Activated naive CD4-positive, alpha-beta T cell treated with anti-CD3 and anti-CD28 coated beads for 36 hours (primary cell): ENCODE measurements at regions of chr2 and their contacts with region 1.

Region 1: DNA sequence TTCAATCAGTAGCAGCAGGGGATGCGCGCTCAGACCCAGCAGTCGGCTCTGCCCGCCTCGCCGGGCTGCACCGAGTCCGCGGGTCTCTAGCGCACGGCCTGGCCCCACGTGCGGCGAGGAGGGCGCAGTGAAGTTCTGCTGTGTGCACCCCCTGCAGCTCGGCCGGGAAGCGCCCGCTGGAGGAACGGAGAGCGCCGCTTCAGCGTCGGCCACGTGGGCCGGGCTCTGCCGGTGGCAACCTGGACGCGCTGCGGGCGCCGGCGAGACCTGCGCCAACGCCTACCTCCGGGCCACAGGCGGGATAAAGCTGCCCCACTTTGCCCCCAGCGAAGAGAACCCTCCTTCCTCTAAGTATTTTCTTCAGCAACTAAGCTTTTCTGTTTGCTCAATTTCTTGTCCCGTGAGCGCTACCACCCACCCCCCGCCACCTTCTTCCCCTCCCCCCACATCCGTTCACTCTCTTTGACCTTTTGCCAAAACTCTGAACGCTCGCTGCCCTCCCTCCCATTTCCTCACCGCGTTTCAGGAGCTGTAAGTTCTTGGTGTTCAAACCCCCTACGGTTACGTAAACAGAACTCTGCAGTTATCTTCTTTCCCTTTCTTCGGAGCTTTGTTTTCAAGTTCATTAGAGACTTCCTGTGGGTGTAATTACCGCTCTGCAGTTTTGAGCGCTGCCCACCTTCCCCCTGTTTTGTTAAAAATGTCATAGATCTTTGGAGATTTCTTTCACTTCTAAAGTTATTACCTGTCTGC is 42.6 kb upstream of the EDAR start:
- DNase-seq: peak; percentile 85
- H3K4me3 Mint-ChIP-seq: peak overlapping the region; percentile 81
- H3K27ac Mint-ChIP-seq: peak overlapping the region; percentile 91
- H3K4me1 Mint-ChIP-seq: peaks cover 65% of the 10 kb centered on the region
- H3K27me3 Mint-ChIP-seq: no peaks in the 10 kb centered on the region

Region 2: DNA sequence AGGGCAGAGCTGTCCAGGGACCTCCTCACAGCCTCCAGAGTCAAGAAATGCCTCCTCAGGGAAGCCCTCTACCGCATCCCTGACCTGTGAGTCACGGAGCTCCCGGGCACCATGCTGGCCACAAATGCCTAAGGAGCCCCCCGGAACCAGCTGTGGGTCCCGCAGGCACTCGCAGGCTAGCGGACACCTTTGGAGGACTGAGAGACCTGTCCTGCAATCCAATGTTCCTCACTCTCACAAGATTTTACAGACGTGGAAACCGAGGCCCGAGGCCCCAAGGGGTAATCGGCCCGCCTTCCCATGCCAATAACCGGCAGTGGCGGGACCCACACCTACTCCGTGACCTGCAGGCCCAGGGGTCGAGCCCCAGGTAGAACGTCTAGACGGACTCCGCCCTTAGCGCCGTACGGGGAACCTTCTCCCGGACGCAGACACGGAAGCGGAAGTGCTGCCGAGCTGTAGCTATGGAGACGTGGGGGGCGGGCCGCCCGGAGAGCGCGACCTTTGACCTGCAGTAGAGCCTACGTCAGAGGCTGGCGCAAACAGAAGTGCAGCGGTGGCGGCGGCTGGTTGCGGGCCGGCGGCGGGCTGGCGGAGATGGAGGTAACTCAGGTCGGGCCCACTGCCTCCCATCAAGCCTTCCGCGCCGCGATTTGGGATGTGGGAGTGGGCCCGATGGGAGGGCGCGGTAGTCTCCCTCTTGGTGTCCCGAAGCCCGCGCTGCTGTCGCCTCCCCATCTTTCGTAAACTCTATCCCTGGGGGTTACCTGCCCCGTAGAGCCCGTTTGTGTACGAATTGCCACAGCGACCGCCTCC is 582.8 kb before region 1 on chr2 and contains the start of gene GCC2:
- CTCF ChIA-PET with region 1: no interaction called
- intact Hi-C with region 1: loop called (anchors 2 kb)
- DNase-seq: peak; percentile 97
- H3K4me3 Mint-ChIP-seq: peak within 1 kb of the TSS; percentile 87
- H3K27ac Mint-ChIP-seq: peak within 1 kb of the TSS; percentile 91
- H3K4me1 Mint-ChIP-seq: peaks cover 27% of the 10 kb centered on the region
- H3K27me3 Mint-ChIP-seq: no peaks in the 10 kb centered on the region
- total RNA-seq, gene GCC2: 33.5 to 39.4 TPM

Region 3: DNA sequence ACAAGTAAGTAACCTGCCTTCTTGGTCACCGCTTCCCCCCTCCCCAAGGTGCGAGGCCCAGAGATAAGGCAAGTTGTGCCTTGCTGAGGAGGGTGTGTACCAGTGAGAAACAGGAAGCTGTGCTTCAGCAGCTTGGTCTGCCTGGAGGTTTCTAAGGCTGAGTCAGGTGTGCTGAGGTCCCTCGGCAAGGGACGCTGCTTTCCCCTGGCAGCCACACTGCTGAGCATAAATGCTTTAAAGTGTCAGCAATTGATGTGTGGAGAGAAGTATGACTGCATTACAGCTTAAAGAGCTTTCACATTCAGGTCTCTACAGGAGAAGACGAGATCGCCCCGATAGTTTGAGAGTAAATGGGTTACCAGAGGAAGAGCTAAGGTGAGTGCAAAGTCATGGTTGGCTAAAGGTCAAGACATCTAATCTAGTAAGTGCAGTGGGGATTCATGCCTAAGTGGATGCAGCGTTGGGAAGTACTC is 410.5 kb before region 1 on chr2:
- CTCF ChIA-PET with region 1: no interaction called
- intact Hi-C with region 1: loop called (anchors 5 kb)
- DNase-seq: peak; percentile 86
- H3K4me3 Mint-ChIP-seq: peak overlapping the region; percentile 84
- H3K27ac Mint-ChIP-seq: peak overlapping the region; percentile 92
- H3K4me1 Mint-ChIP-seq: peaks cover 80% of the 10 kb centered on the region
- H3K27me3 Mint-ChIP-seq: no peaks in the 10 kb centered on the region

Region 4: DNA sequence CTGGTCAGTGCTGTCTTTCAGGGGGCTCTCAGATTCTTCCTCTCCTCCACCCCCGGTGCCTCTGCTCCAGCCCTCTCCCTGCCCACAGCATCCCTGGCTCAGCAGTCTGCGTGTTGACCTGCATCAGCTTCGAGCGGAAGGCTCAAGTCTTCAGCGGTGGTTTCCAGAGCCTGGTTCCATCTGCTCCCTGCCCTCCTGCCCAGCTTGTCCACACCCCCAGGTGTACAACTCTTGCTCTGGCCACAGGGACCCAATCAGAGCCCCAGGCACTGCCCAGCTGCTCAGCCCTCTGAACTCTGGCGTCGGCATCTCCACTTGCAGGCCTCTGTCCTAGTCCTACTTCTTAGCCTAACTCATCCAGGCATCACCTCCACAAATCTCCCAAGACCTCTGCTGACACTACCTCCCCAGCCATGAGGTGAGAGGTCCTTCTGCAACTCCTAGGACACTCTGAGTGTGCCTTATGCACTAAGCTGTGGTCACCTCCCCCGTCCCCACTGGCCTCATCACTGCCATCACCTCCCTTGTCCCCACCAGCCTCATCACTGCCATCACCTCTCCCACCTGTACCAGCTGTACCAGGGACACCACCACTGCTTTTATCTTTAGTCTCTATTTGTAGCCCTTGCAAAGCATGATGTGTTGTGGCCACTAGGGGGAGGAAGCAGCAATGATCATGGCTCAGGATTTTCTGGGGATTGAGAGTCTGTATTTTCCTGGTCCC is 103.6 kb before region 1 on chr2:
- CTCF ChIA-PET with region 1: interaction called, 8 read pairs
- intact Hi-C with region 1: loop called (anchors 1 kb)
- DNase-seq: peak; percentile 66
- H3K4me3 Mint-ChIP-seq: no peak overlapping the region
- H3K27ac Mint-ChIP-seq: no peak overlapping the region
- H3K4me1 Mint-ChIP-seq: no peaks in the 10 kb centered on the region
- H3K27me3 Mint-ChIP-seq: no peaks in the 10 kb centered on the region

Region 5: DNA sequence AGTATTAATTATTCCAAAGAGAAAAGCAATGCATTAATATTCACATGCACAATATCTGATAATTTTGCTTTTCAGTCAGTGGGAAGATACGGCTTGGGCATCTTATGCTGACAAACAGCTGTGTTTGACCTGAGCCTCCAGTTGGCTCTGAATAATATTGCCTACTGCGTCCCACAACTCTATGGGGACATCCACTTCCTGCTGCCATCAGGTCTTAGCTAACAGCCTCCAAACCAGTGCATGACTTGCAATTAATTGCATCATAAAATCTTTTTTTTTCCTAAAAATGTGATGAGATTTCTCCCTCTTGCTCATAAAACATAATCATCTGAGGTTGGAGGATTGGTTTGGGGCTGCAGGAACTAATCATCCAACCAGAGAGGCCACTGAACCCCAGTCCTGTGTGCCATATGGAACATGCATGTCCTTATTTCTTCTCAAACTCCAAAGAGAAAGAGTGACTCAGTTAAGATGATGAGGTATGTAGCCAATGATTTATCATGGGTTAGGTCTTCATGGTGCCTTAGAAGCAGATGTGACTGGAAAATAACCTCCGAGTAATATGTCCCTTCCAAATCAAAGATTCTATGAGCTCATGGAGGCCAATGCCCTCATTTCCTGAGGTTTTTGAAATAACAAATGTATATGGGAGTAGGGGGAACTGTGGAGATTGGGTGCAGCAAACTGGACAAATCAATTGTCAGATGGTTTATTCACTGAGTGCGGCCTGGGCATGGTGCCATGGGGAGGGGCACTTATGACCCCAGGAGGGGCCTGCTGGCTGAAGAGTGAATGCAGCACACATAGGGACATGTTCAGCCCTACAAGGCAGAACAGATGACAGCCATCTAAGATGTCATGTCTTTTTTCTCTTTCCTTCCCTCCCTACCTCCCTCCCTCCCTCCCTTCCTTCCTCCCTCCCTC is 82.1 kb before region 1 on chr2:
- CTCF ChIA-PET with region 1: no interaction called
- intact Hi-C with region 1: no loop called
- DNase-seq: no peak
- H3K4me3 Mint-ChIP-seq: no peak overlapping the region
- H3K27ac Mint-ChIP-seq: no peak overlapping the region
- H3K4me1 Mint-ChIP-seq: peaks cover 6% of the 10 kb centered on the region
- H3K27me3 Mint-ChIP-seq: no peaks in the 10 kb centered on the region

Region 6: DNA sequence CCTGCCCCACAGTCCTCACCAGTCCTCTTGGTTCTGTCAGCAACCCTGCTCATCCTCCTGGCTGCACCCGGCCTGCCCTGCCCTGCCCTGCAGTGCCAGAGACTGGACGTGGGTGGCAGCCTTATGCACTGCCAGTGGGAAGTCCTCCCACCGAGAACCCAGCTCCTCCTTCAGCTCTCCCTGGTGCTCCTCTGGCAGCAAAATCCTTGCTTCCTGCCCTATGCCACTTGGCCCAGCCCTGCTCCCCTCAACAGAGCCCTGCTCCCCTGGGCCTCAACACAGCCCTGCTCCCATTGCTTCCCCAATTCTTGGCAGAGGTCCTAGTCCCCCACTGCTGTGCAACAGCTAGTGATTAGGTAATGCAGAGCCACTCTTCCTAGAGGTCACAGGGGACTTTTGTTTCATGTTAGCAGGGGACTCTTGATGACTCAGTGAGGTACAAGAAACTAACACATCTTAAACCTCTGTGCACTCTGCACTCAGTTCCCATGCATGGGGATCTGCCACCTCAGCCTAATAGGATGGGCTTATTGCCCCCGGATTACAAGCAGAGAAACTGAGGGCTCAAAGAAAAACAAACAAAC is 15.4 kb after region 1 on chr2:
- CTCF ChIA-PET with region 1: no interaction called
- intact Hi-C with region 1: loop called (anchors 2 kb)
- DNase-seq: peak; percentile 48
- H3K4me3 Mint-ChIP-seq: no peak overlapping the region
- H3K27ac Mint-ChIP-seq: no peak overlapping the region
- H3K4me1 Mint-ChIP-seq: peaks cover 24% of the 10 kb centered on the region
- H3K27me3 Mint-ChIP-seq: no peaks in the 10 kb centered on the region

Region 7: DNA sequence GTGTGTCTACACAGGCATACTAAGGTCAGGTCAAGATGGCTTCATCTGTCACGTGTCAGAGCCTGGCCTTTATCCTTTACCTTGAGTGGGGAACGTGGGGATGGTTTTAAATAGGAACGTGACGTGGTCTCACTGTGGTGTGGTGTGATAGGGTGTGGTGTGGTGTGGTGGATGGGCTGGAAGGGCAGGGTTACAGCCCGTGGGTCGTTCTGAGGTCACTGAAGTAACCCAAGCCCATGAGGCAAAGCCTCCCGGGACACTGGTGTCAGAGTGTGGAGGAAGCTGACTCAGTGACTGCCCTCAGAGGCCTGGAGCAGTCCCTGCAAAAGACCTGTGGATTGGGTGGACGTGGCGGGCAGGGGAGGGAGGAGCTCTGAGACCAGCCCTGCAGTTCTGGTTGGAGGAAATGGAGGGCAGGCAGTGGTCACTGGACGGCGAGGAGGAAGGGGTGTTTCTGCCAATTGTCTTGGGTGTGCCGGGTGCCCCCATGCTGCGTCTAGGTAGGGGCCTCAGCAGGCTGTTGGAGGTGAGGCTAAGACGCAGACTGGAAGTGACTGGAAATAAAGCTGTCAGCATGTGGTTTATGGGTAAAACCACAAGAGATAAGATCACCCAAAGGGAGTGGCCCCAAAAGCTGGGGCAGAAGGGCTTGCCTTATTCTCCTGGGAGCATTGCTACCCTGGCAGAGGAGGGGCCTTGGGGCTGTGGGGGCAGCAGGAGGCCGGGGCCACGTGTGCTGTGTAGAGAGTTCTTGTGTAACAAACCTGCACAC is 182.2 kb after region 1 on chr2:
- CTCF ChIA-PET with region 1: no interaction called
- intact Hi-C with region 1: loop called (anchors 1 kb)
- DNase-seq: peak; percentile 78
- H3K4me3 Mint-ChIP-seq: peak overlapping the region; percentile 49
- H3K27ac Mint-ChIP-seq: peak overlapping the region; percentile 54
- H3K4me1 Mint-ChIP-seq: peaks cover 70% of the 10 kb centered on the region
- H3K27me3 Mint-ChIP-seq: peaks cover 70% of the 10 kb centered on the region